ENCODE measurements at regions of chr6 and their contacts with region 1.

Region 1: DNA sequence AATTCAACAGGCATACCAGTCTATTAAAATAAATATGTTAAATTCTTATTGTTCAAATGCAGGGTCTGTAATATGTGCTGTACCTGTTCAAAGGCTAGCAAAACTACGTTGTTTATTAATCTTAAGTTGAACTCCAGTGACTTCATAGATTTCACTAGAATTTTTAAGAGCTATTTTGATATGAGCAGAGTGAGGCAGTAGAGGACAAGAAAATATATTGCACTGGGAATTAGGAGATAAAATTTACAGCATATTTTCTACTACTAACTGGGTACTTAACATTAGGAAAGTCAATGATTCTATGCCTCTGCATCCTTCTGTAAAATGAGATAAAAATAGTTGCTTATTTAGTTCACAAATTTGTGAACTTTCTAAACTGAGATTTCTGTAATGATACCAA is 162.2 kb upstream of the BMP5 start:
- DNase-seq: no peak
- ATAC-seq: no peak
- H3K4me3 ChIP-seq: no peak overlapping the region
- H3K4me3 Mint-ChIP-seq: no peak overlapping the region
- H3K27ac ChIP-seq: no peak overlapping the region
- H3K27ac Mint-ChIP-seq: no peak overlapping the region
- H3K4me1 ChIP-seq: no peaks in the 10 kb centered on the region
- H3K4me1 Mint-ChIP-seq: no peaks in the 10 kb centered on the region
- H3K27me3 ChIP-seq: no peaks in the 10 kb centered on the region
- H3K27me3 Mint-ChIP-seq: no peaks in the 10 kb centered on the region
- CTCF ChIP-seq: no peak

Region 2: GRCh38 chr6:55925292-55925691 is 112.3 kb before region 1 on chr6:
- CTCF ChIA-PET with region 1: no interaction called
- POLR2A ChIA-PET with region 1: no interaction called
- intact Hi-C with region 1: no loop called
- DNase-seq: no peak
- ATAC-seq: no peak
- H3K4me3 ChIP-seq: no peak overlapping the region
- H3K4me3 Mint-ChIP-seq: no peak overlapping the region
- H3K27ac ChIP-seq: no peak overlapping the region
- H3K27ac Mint-ChIP-seq: no peak overlapping the region
- H3K4me1 ChIP-seq: no peaks in the 10 kb centered on the region
- H3K4me1 Mint-ChIP-seq: no peaks in the 10 kb centered on the region
- H3K27me3 ChIP-seq: no peaks in the 10 kb centered on the region
- H3K27me3 Mint-ChIP-seq: no peaks in the 10 kb centered on the region
- CTCF ChIP-seq: no peak

Region 3: DNA sequence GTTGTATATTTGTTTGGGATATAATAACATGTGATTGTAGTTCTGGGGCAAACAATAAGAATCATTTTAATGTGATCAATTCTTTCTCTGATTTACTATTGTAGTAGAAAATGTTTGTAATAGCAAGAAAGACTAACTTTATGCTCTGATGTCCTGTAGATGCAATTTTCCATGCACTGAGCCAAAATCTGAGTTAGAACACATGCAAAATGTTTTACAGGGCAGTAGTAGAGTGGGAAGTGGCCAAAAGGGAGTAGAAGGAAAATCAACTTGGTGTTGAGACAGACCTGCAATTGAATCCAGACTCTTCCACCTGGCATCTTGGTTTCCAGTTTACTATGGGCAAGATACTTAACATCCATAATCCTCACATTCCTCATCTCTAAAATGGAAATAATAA is 68.7 kb before region 1 on chr6:
- CTCF ChIA-PET with region 1: no interaction called
- POLR2A ChIA-PET with region 1: no interaction called
- intact Hi-C with region 1: loop called in 1 of 2 experiments (anchors 5 kb)
- DNase-seq: no peak
- ATAC-seq: no peak
- H3K4me3 ChIP-seq: no peak overlapping the region
- H3K4me3 Mint-ChIP-seq: no peak overlapping the region
- H3K27ac ChIP-seq: no peak overlapping the region
- H3K27ac Mint-ChIP-seq: no peak overlapping the region
- H3K4me1 ChIP-seq: no peaks in the 10 kb centered on the region
- H3K4me1 Mint-ChIP-seq: no peaks in the 10 kb centered on the region
- H3K27me3 ChIP-seq: no peaks in the 10 kb centered on the region
- H3K27me3 Mint-ChIP-seq: no peaks in the 10 kb centered on the region
- CTCF ChIP-seq: no peak